ENCODE measurements at regions of chr2 and their contacts with region 1.

Region 1: DNA sequence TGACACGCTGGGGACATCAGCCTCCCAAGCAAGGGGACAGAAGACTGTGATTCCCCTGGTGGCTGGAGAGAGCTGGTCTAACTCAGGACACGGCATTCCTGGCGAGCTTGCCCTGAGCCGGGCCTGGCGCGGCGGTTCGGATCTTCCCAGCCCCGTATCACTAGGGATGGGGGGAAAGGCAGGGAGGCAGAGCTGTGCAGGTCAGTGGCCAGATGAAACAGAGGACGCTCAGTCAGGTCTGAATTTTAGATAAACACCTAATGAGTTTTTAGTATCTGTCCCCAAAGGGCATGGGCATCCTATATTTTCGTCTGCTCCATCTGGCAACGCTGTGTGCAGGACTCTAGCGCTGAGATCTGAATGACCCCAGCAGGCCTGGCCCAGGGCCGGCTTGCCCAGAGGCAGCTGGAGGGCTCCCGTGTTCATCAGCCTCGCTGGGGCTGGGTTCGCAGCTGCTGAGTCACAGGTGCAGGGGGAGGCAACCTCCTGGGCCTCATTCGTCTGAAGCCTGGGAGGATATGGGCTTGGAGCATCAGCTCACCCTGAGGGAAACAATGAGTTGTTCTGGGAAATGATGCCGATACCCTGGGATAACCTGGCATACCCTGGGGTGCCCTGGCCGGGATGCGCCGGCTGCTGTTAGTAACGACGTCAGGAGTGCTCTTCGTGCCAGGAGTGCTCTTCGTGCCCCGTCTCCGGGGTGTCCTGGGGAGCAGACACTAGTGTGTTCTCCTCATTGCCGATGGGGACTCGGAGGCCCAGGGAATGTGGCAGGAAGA is 48.1 kb upstream of the HPCAL1 start:
- DNase-seq: peak in 1 of 3 donors; percentile 36
- ATAC-seq: no peak
- H3K4me3 ChIP-seq: no peak overlapping the region
- H3K27ac ChIP-seq: no peak overlapping the region
- H3K4me1 ChIP-seq: no peaks in the 10 kb centered on the region
- H3K27me3 ChIP-seq: no peaks in the 10 kb centered on the region
- CTCF ChIP-seq: no peak
- POLR2A ChIP-seq: no peak

Region 2: GRCh38 chr2:10193851-10194820 is 60.4 kb before region 1 on chr2:
- intact Hi-C with region 1: loop called in 1 of 2 experiments (anchors 10 kb)
- DNase-seq: no peak
- ATAC-seq: no peak
- H3K4me3 ChIP-seq: no peak overlapping the region
- H3K27ac ChIP-seq: no peak overlapping the region
- H3K4me1 ChIP-seq: no peaks in the 10 kb centered on the region
- H3K27me3 ChIP-seq: no peaks in the 10 kb centered on the region
- CTCF ChIP-seq: no peak
- POLR2A ChIP-seq: no peak